ENCODE measurements at regions of chr6 and their contacts with region 1.

Region 1: GRCh38 chr6:166342349-166343149 is at the start of gene SFT2D1:
- DNase-seq: peak; percentile 60 to 92
- H3K4me3 ChIP-seq: peak within 1 kb of the TSS; percentile 66 to 85
- H3K27ac ChIP-seq: peak within 1 kb of the TSS; percentile 85 to 94
- H3K4me1 ChIP-seq: peaks cover 12 to 15% of the 10 kb centered on the region in 2 donors
- H3K27me3 ChIP-seq: no peaks in the 10 kb centered on the region
- CTCF ChIP-seq: no peak
- total RNA-seq, gene SFT2D1: 77.7 TPM

Region 2: DNA sequence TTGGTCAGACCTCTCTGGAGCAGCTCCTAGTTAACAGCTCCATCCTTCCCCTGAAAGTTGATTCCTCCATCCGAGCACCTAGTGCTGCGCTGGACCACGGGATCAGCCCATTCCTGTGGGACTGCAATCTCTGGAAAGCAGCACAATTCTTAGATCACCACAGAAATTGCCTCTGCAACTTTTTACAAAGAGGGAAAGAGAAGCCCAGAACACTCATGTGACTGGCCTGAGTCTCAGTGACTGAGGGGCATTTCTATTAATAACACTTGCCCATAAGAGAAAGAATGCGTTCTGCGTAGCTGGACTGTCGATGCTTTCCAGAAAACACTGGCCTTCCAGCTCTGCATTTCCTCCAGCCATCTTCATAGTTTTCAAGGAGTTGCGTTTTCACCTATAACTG is 21.9 kb after region 1 on chr6:
- intact Hi-C with region 1: loop called (anchors 1 kb)
- DNase-seq: peak; percentile 20 to 81
- H3K4me3 ChIP-seq: peak overlapping the region in 1 of 2 donors; percentile 40
- H3K27ac ChIP-seq: peak overlapping the region; percentile 81
- H3K4me1 ChIP-seq: peaks cover 0 to 9% of the 10 kb centered on the region in 2 donors
- H3K27me3 ChIP-seq: no peaks in the 10 kb centered on the region
- CTCF ChIP-seq: no peak